ENCODE measurements at regions of chr6 and their contacts with region 1.

Region 1: DNA sequence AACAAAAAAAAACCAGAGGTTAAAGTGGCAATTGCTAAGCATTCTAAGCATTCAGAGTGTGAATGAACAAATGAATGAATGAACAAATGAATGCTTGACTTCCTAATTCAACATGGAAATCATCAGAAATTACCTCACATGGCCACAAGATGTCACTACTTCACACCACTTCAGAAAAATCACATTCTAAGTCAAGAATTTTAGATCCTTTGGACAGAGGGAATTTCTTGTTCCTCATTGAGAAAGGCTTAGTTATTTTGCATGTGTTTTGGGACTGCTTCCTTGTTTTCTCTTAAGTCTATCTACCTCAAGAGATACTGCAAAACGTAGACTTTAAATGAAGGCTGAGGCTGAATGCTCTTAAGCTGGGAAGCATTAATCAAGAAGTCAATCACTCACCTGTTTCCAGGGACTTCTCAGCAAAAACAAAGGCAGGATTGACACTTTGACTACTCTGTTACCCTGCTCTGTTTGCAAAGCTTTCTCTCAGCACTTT is 120.2 kb downstream of the MBOAT1 start:
- DNase-seq: no peak
- H3K4me3 Mint-ChIP-seq: no peak overlapping the region
- H3K27ac Mint-ChIP-seq: no peak overlapping the region
- H3K4me1 Mint-ChIP-seq: no peaks in the 10 kb centered on the region
- H3K27me3 Mint-ChIP-seq: no peaks in the 10 kb centered on the region

Region 2: GRCh38 chr6:20115246-20115980 is 23.3 kb after region 1 on chr6:
- CTCF ChIA-PET with region 1: no interaction called
- POLR2A ChIA-PET with region 1: no interaction called
- intact Hi-C with region 1: no loop called
- DNase-seq: no peak
- H3K4me3 Mint-ChIP-seq: no peak overlapping the region
- H3K27ac Mint-ChIP-seq: no peak overlapping the region
- H3K4me1 Mint-ChIP-seq: no peaks in the 10 kb centered on the region
- H3K27me3 Mint-ChIP-seq: no peaks in the 10 kb centered on the region

Region 3: DNA sequence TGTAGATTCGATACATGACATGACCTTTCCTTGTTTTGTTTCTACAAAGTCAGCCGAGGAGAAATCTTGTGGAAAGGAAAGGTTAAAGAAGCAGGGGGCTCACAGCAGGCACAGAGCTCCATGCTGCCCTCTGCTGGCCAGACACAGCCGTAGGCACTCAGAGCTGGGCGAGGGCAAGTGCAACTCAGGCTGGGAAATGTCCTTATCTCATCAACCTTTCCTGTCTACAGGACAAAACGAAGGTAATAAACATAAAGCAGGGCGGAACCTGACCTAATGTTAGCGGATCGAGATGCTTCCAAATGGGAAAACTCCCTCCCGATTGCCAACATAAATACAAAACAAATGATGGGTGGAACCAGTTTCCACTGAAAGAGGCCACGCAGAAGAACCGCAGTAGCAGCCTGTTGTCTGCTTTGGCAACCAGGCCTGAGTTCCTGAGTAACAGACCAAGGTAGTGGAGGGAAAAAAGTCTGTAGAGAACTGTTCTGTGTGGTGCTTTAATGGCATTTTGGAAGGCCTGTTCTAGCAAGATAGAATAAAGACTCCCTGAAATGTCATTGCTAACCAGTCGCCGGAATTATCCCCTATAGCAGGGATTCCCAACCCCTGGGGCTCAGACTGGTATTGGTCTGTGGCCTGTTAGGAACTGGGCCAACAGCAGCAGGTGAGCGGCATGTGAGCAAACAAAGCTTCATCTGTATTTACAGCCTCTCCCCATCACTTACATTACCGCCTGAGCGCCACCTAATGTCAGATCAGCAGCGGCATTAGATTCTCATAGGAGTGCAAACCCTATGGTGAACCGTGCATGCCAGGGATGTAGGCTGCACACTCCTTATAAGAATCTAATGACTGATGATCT is 34.9 kb after region 1 on chr6:
- CTCF ChIA-PET with region 1: interaction called, 14 read pairs
- POLR2A ChIA-PET with region 1: no interaction called
- intact Hi-C with region 1: no loop called
- DNase-seq: peak; percentile 69
- H3K4me3 Mint-ChIP-seq: no peak overlapping the region
- H3K27ac Mint-ChIP-seq: no peak overlapping the region
- H3K4me1 Mint-ChIP-seq: peaks cover 4% of the 10 kb centered on the region
- H3K27me3 Mint-ChIP-seq: no peaks in the 10 kb centered on the region

Region 4: GRCh38 chr6:20266851-20267608 is 174.9 kb after region 1 on chr6:
- CTCF ChIA-PET with region 1: interaction called, 8 read pairs
- POLR2A ChIA-PET with region 1: no interaction called
- intact Hi-C with region 1: loop called (anchors 1 kb)
- DNase-seq: peak; percentile 50
- H3K4me3 Mint-ChIP-seq: no peak overlapping the region
- H3K27ac Mint-ChIP-seq: peak overlapping the region; percentile 4
- H3K4me1 Mint-ChIP-seq: peaks cover 7% of the 10 kb centered on the region
- H3K27me3 Mint-ChIP-seq: no peaks in the 10 kb centered on the region

Region 5: GRCh38 chr6:20291764-20292580 is 199.9 kb after region 1 on chr6:
- CTCF ChIA-PET with region 1: interaction called, 8 read pairs
- POLR2A ChIA-PET with region 1: no interaction called
- intact Hi-C with region 1: loop called (anchors 1 kb)
- DNase-seq: peak; percentile 85
- H3K4me3 Mint-ChIP-seq: no peak overlapping the region
- H3K27ac Mint-ChIP-seq: no peak overlapping the region
- H3K4me1 Mint-ChIP-seq: peaks cover 7% of the 10 kb centered on the region
- H3K27me3 Mint-ChIP-seq: no peaks in the 10 kb centered on the region

Region 6: DNA sequence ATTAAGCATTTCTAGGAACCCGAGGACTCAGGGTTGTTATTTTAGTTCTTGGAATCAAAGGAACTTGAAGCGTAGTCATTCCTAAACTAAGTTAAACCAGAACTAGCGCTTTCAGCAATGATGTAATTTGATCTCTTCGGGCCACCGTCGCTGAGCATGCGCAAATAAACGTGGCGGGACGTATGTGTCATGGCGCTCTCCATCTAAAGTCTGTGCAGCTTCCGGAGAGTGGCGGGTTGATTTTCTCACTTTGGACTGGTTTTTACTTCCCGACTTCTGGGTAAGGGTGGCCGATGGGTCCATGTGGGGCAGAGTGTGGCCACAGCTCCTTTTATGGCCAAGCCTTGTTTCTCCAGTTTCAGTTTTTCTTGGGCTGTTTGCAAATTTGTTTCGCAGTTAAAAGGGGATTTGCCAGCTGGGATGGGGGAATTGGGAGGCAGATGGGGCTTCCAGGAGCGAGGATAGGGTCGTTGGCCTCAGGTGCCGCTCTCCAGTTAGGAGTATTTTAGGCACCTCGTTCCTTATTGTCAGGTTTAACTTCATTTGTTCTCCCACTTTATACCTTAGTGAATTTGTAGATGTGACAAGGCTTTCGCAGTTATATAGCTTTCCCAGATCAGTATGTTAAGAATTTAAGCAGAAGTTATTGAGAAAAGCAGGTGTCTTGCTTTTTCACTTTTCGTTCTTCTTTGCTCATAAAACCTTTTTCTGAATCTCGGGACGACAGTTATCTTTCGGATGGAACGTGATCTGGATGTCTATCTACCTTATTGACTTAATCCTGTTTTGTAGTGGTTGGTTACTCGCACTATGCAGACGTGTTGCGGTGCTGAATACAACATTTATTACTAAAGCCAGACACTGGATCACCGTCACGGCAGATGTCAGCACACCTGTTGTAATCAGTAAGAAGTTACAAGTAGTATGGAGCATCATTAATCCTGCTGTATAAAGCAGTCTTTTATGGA is 442.5 kb after region 1 on chr6 and contains the start of gene CDKAL1:
- CTCF ChIA-PET with region 1: interaction called, 7 read pairs
- POLR2A ChIA-PET with region 1: no interaction called
- intact Hi-C with region 1: loop called (anchors 2 kb)
- DNase-seq: peak; percentile 96
- H3K4me3 Mint-ChIP-seq: peak within 1 kb of the TSS; percentile 99
- H3K27ac Mint-ChIP-seq: peak within 1 kb of the TSS; percentile 97
- H3K4me1 Mint-ChIP-seq: peaks cover 34% of the 10 kb centered on the region
- H3K27me3 Mint-ChIP-seq: peaks cover 3% of the 10 kb centered on the region
- total RNA-seq, gene CDKAL1: 23.1 to 23.2 TPM

Measured in activated CD4-positive, alpha-beta memory T cell treated with anti-CD3 and anti-CD28 coated beads for 36 hours (primary cell).